Mucosa of descending colon (tissue), 3 donors: ENCODE measurements at regions of chr4 and their contacts with region 1.

Region 1: GRCh38 chr4:27123123-27123768 is 262.6 kb downstream of the STIM2 start:
- DNase-seq: peak in 2 of 3 donors; percentile 43 to 80
- ATAC-seq: peak; percentile 83
- H3K4me3 ChIP-seq: no peak overlapping the region
- H3K4me1 ChIP-seq: peaks cover 4% of the 10 kb centered on the region
- CTCF ChIP-seq: no peak

Region 2: DNA sequence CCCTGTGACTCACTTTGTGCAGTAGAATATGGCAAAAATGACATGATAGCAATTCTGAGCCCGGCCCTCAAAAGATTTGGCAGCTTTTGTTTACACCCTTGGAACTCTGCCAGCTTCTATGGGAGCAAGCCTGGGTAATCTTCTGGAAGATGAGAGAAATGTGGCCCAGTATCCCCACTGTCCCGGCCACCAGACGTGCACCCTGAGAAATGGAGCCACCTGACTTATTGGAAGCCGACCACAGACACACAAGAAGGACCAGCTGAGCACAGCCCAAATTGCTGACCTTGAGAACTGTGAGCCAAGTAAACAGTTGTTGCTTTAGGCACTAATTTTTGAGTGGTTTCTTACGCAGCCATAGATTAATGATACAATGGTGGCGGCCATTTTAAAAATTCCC is 65.6 kb before region 1 on chr4:
- intact Hi-C with region 1: loop called in 1 of 2 experiments (anchors 10 kb)
- DNase-seq: no peak
- ATAC-seq: no peak
- H3K4me3 ChIP-seq: no peak overlapping the region
- H3K4me1 ChIP-seq: no peaks in the 10 kb centered on the region
- CTCF ChIP-seq: no peak